Ascending aorta (tissue), 2 donors: ENCODE measurements at regions of chr1 and their contacts with region 1.

Region 1: DNA sequence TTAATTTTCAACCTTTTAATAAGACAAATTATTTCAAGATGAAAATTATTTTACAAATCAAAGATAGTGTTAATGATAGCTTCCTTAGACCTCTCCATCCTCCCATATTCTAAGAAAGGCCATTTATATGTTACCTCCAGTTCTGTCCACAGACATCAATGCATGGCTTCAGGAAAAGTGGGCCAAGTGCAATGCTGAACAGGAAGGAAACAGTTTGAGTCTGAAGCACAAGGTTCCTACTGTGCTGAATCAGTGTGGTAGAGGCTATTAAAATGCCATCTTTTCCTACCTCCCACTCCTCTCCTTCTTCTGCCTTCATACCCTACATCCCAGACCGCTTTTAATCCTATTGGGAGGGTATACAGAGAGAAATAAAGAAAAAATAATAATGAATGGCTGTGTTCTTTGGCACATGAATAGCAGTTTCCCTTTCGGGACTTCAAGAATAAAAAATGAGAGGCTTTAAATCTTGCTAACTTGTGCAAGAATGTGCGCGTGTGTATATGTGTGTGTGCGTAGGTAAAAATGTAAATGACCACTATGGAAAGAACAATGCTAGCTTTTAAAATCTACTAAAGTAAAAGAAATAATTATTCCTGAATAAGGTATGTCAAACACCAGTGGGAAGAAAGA is 62.6 kb upstream of the C1orf105 start:
- DNase-seq: no peak
- H3K4me3 ChIP-seq: peak overlapping the region; percentile 10 to 52
- H3K27ac ChIP-seq: peak overlapping the region; percentile 86
- H3K4me1 ChIP-seq: peaks cover 3 to 14% of the 10 kb centered on the region in 2 donors
- H3K27me3 ChIP-seq: no peaks in the 10 kb centered on the region
- CTCF ChIP-seq: no peak

Region 2: GRCh38 chr1:172383536-172383935 is 25.7 kb after region 1 on chr1:
- intact Hi-C with region 1: loop called (anchors 2 kb)
- DNase-seq: no peak
- H3K4me3 ChIP-seq: peak overlapping the region in 1 of 2 donors; percentile 44
- H3K27ac ChIP-seq: peak overlapping the region; percentile 60 to 63
- H3K4me1 ChIP-seq: peaks cover 0 to 16% of the 10 kb centered on the region in 2 donors
- H3K27me3 ChIP-seq: no peaks in the 10 kb centered on the region
- CTCF ChIP-seq: no peak

Region 3: DNA sequence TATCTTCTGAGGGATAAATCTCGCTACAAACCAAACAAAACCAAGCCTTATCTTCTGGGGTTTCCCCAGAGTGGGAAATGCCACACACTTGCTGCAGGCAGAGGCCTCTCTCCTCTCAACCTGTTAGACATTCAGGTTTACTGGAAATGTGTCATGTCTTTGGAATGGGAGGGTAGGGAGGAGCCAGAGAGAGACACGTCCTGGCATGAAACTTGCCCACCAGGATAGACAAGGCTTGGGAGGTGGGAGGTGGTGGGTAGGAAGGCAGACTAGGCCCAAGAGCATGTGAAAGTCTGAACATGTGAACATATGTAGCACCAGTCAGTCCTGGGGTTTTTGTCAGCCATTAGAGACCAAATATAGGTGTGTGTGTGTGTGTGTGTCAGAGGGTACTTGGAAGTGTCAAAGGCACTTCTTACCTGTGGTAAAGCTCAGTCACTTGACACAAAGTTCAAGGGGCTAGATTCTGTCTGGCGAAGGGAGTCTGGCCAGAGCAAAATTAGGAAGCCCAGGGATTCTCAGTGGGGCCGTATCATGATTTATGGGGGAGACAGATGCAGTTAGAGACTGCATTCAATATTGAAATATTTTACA is 118.4 kb after region 1 on chr1:
- intact Hi-C with region 1: no loop called
- DNase-seq: no peak
- H3K4me3 ChIP-seq: no peak overlapping the region
- H3K27ac ChIP-seq: no peak overlapping the region
- H3K4me1 ChIP-seq: no peaks in the 10 kb centered on the region
- H3K27me3 ChIP-seq: no peaks in the 10 kb centered on the region
- CTCF ChIP-seq: no peak

Region 4: GRCh38 chr1:173297798-173298391 is 940.0 kb after region 1 on chr1:
- intact Hi-C with region 1: no loop called
- DNase-seq: no peak
- H3K4me3 ChIP-seq: no peak overlapping the region
- H3K27ac ChIP-seq: no peak overlapping the region
- H3K4me1 ChIP-seq: no peaks in the 10 kb centered on the region
- H3K27me3 ChIP-seq: no peaks in the 10 kb centered on the region
- CTCF ChIP-seq: no peak